GM10248 (cell line): ENCODE measurements at regions of chr18 and their contacts with region 1.

Region 1: GRCh38 chr18:60007661-60008060 is 107.9 kb downstream of the PMAIP1 start:
- DNase-seq: no peak
- CTCF ChIP-seq: no peak

Region 2: GRCh38 chr18:59783138-59783537 is 224.5 kb before region 1 on chr18:
- CTCF ChIA-PET with region 1: no interaction called
- POLR2A ChIA-PET with region 1: no interaction called
- DNase-seq: peak; percentile 59
- CTCF ChIP-seq: peak; percentile 77

Region 3: DNA sequence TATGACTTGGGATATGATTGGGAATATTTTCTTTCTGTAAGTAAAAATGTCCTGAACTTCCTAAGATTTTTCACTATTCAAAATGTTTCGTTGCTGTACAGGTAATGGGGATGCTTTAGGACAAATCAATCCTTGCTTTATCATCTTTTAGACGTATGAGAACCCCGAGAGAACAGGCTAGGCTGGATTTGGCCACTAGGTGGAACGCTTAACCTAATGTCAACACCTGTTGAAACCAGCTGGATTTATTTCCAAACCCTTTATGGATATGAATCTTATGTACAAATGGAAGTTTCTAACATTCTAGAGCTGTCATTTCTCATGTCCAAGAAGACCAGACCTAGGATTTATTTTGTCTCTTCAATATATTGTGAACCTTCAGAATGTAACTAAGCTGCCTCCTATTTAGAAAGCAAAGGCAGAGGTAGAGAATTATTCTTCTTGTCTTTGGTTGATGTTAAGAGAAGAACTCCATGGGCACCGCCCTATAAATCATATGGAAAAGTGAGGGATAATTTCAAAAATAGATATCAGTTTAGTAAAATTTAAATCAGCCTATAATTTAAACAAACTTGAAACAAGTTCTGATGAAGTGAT is 11.2 kb before region 1 on chr18:
- CTCF ChIA-PET with region 1: interaction called, 10 read pairs
- POLR2A ChIA-PET with region 1: no interaction called
- DNase-seq: peak; percentile 30
- CTCF ChIP-seq: peak; percentile 67